Gastrocnemius medialis (tissue), 4 donors: ENCODE measurements at regions of chr19 and their contacts with region 1.

Region 1: GRCh38 chr19:13117772-13118423 is at the start of gene NACC1:
- DNase-seq: peak; percentile 82 to 88
- ATAC-seq: peak; percentile 82 to 83
- H3K4me3 ChIP-seq: peak within 1 kb of the TSS; percentile 90 to 100 (median 94)
- H3K27ac ChIP-seq: peak within 1 kb of the TSS; percentile 79 to 93 (median 86)
- H3K4me1 ChIP-seq: peaks cover 28 to 36% of the 10 kb centered on the region in 2 donors
- H3K27me3 ChIP-seq: no peaks in the 10 kb centered on the region
- CTCF ChIP-seq: peak in 1 of 5 experiments; percentile 11
- POLR2A ChIP-seq: no peak
- total RNA-seq, gene NACC1: 36.3 to 81.3 (median 49.4) TPM

Region 2: GRCh38 chr19:12881172-12881808 is 236.6 kb before region 1 on chr19 and contains the start of gene DNASE2:
- in situ Hi-C with region 1: no loop called
- intact Hi-C with region 1: loop called (anchors 5 kb)
- DNase-seq: peak; percentile 94 to 99
- ATAC-seq: peak; percentile 90 to 95
- H3K4me3 ChIP-seq: peak within 1 kb of the TSS; percentile 72 to 97 (median 82)
- H3K27ac ChIP-seq: peak within 1 kb of the TSS; percentile 81 to 98 (median 94)
- H3K4me1 ChIP-seq: peaks cover 7 to 30% of the 10 kb centered on the region in 2 donors
- H3K27me3 ChIP-seq: peaks cover 8 to 25% (median 15%) of the 10 kb centered on the region in 3 donors
- CTCF ChIP-seq: no peak
- POLR2A ChIP-seq: peak; percentile 63 to 73
- total RNA-seq, gene DNASE2: 11.9 to 44.3 (median 15.4) TPM

Region 3: DNA sequence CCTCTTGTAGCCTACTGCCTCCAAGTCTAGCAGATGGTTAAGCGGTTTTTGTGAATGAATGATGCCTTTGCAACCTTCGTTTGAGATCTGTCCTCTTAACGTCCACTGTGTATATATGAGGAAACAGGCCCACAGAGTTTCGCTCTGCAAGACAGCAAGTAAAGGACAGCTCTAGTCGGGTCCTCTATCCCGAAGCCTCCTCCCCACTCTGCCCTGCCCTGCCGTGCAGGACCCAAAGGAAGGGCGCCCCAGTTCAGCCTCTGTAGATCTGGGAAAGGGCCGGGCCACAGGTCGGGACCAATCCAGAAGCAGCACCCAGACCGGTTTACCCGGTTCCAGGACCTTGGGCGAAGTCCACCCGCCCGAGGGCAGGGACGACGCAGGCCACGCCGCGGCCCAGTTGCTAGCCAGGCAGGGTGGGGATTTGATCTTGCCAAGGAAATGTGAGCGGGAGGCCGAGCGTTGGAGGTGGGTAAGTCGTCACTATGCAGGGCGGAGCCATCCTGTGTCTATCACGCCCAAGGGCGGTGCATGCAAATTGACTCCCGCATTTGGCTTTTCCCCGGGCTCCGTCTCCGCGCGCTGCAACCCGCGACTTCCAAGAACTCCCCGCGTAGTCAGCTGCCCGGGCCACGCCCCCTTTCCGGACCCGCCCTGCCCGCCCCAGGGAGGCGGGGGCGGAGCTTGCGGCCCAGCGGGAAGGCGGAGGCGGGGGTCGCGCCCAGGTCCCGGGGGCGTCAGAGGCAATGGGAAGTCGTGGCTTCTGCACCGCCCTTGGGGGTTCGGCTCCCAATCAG is 44.8 kb after region 1 on chr19:
- in situ Hi-C with region 1: no loop called
- intact Hi-C with region 1: loop called (anchors 1 kb)
- DNase-seq: peak; percentile 95 to 97
- ATAC-seq: peak; percentile 95 to 96
- H3K4me3 ChIP-seq: peak overlapping the region; percentile 52 to 65 (median 60)
- H3K27ac ChIP-seq: peak overlapping the region; percentile 80 to 89 (median 88)
- H3K4me1 ChIP-seq: peaks cover 14 to 26% of the 10 kb centered on the region in 2 donors
- H3K27me3 ChIP-seq: no peaks in the 10 kb centered on the region
- CTCF ChIP-seq: no peak
- POLR2A ChIP-seq: peak; percentile 38 to 57

Region 4: GRCh38 chr19:13573056-13573667 is 455.3 kb after region 1 on chr19:
- in situ Hi-C with region 1: no loop called
- intact Hi-C with region 1: no loop called
- DNase-seq: no peak
- ATAC-seq: no peak
- H3K4me3 ChIP-seq: no peak overlapping the region
- H3K27ac ChIP-seq: no peak overlapping the region
- H3K4me1 ChIP-seq: no peaks in the 10 kb centered on the region
- H3K27me3 ChIP-seq: no peaks in the 10 kb centered on the region
- CTCF ChIP-seq: no peak
- POLR2A ChIP-seq: no peak